ENCODE measurements at regions of chr10 and their contacts with region 1.

Region 1: GRCh38 chr10:99612167-99612831 is 7.9 kb downstream of the SLC25A28 start:
- DNase-seq: peak; percentile 69
- CTCF ChIP-seq: peak; percentile 80

Region 2: DNA sequence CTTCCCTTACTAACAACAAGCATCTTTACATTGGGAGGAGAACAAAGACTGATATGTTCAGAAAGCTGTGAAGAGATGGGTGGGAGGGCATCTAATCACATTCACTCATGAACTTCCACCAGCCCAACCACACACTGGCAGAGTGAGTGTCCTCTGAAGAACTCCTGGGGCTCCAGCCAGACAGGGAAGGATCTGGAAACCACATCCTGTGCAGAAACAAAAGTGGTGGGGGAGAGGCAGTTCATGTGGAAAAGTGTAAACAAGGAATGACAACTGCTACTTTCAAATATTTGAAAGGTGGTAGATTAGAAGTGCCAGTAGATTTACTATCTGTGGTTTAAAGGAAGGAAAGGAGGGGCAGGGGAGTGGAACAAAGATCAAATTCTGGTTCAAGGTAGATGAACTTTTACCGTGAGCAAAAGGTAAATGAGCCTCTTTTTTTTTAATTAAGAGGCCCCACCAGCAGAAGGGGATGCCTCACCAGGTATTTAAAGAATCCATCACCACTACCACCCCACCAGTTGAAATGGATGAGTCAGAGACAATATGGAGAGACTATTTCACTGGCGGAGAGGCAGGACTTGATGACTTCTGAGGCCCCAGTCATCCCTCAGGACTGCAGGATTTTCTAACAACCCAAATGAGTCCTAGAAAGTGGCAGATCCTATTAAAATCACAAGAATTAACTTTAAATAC is 216.4 kb before region 1 on chr10:
- CTCF ChIA-PET with region 1: interaction called, 50 read pairs
- POLR2A ChIA-PET with region 1: no interaction called
- DNase-seq: no peak
- CTCF ChIP-seq: no peak

Region 3: GRCh38 chr10:99430451-99431189 is 181.7 kb before region 1 on chr10 and contains the start of gene GOT1:
- CTCF ChIA-PET with region 1: interaction called, 64 read pairs
- POLR2A ChIA-PET with region 1: no interaction called
- DNase-seq: peak; percentile 98
- CTCF ChIP-seq: no peak

Region 4: DNA sequence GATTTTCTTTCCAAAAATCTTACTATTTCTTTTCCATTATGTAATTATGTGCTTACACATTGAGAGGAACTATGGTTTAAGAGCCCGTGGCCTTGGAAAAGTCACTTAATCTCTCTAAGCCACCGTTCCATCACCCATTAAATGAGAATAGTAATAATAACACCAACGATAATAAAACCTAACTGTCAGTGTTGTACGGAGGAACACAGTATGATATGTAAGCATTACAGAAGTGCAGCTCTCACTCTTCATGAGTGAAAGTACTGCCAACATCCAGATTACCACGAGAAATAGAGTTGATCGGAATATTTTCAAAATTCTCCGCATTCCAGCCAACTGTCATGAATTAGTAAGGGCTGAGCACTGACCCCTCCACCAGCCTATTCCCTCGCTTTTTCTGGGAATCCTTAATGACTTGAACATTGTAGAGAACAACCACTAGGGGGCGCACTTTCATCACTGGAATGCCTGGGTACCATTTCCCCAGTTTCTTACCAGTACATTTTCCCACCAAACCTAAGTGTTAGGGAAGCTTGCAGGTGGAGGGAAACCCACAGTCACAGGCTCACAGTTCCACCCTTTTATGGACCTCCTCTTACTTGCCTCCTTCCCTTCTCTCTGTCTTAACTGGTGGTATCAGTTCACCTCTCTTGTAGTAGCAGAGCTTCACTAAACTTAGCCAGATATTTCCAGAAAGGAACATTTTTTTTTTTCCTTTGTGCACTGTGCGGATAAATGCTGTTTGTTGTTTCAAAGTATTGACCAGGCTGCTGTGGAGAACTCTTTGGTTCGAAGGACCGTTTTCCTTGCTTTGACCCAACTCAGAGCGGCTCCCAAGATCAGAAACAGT is 51.8 kb before region 1 on chr10:
- CTCF ChIA-PET with region 1: interaction called, 55 read pairs
- POLR2A ChIA-PET with region 1: no interaction called
- DNase-seq: peak; percentile 45
- CTCF ChIP-seq: peak; percentile 65

Region 5: GRCh38 chr10:99598781-99599509 is 13.4 kb before region 1 on chr10:
- CTCF ChIA-PET with region 1: interaction called, 25 read pairs
- POLR2A ChIA-PET with region 1: no interaction called
- DNase-seq: no peak
- CTCF ChIP-seq: no peak

Region 6: GRCh38 chr10:99779335-99779734 is 167.0 kb after region 1 on chr10:
- CTCF ChIA-PET with region 1: no interaction called
- POLR2A ChIA-PET with region 1: no interaction called
- DNase-seq: no peak
- CTCF ChIP-seq: no peak

Region 7: GRCh38 chr10:100114976-100115770 is 502.9 kb after region 1 on chr10:
- CTCF ChIA-PET with region 1: no interaction called
- POLR2A ChIA-PET with region 1: no interaction called
- DNase-seq: no peak
- CTCF ChIP-seq: no peak